ENCODE measurements at regions of chr20 and their contacts with region 1.

Region 1: DNA sequence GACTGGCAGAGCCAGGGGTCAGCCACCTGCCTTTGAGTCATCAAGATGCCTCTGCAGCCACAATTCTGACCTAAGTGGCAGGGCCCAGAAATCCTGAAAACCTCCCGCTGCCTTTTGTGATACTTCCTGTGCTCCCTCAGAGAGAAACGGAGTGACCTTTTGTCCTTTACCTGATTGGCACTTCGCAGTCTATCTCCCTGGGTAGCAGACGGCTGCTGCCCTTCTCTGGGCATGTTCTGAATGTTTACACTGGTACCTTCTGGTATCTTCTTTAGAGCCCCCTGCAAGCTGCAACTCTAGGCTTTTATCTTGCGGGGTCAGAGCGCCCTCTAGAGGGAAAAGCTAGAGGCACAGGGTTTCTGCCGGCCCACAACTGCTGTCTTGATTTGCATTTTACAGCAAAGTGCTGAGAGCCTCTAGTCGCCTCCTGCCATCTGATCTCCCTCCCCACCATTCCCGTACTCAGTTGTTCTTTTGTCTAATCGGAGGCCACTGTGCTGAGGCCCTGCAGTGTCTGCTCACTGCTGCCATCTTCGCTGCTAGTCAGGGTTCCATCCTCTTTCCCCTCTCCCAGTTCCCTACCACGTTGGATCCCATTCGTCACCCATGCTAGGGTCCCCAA is 26.9 kb downstream of the SPATA2 start:
- DNase-seq: no peak
- ATAC-seq: peak; percentile 55
- H3K4me3 ChIP-seq: no peak overlapping the region
- H3K27ac ChIP-seq: peak overlapping the region in 1 of 2 donors; percentile 14
- H3K4me1 ChIP-seq: no peaks in the 10 kb centered on the region
- H3K27me3 ChIP-seq: no peaks in the 10 kb centered on the region

Region 2: GRCh38 chr20:49812463-49813304 is 75.8 kb before region 1 on chr20 and contains the start of gene SLC9A8:
- intact Hi-C with region 1: loop called in 1 of 2 experiments (anchors 5 kb)
- DNase-seq: peak; percentile 95 to 96
- ATAC-seq: peak; percentile 96
- H3K4me3 ChIP-seq: peak within 1 kb of the TSS; percentile 59 to 80
- H3K27ac ChIP-seq: peak within 1 kb of the TSS; percentile 39 to 52
- H3K4me1 ChIP-seq: peaks cover 0 to 6% of the 10 kb centered on the region in 2 donors
- H3K27me3 ChIP-seq: no peaks in the 10 kb centered on the region
- total RNA-seq, gene SLC9A8: 12.5 to 14.6 TPM

Region 3: DNA sequence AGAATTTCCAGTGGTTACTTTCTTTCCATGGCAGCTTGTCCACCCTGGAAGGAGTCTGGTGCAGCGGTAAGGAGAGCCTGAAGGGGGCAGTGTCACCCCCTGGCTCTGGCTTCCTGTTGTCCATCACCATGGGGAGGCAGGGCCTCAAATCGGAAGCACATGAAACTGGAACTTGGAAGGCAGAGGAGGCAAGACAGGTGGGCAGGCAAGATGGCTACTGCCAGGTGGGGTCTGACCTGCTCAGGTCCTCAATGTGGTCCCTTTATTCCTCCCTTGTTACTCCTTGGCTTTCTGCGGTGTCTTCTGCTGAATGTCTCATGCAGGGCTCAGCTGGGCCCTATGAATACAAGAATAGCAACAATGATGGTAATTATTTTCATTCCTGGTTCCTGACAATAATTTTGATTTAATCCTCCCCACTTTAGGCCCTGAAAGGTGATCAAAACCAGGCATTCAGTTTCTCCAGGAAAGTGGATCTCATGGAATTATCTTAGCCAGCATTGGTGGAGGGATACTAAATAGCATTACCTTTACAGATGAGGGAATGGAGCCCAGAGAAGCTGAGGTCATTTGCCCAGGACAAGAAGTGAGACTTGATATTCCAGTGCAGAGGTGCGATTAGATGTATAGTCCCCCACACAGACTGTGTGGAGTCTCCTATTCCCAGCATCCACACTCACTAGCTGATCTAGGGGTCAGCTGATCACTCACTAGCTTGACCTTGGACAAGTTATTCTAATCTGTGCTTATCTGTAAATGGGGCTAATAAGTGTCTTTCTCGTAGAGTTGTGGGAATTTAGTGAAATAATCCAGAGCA is 76.7 kb after region 1 on chr20:
- intact Hi-C with region 1: no loop called
- DNase-seq: peak in 1 of 2 donors; percentile 68
- ATAC-seq: no peak
- H3K4me3 ChIP-seq: no peak overlapping the region
- H3K27ac ChIP-seq: no peak overlapping the region
- H3K4me1 ChIP-seq: no peaks in the 10 kb centered on the region
- H3K27me3 ChIP-seq: no peaks in the 10 kb centered on the region

Region 4: DNA sequence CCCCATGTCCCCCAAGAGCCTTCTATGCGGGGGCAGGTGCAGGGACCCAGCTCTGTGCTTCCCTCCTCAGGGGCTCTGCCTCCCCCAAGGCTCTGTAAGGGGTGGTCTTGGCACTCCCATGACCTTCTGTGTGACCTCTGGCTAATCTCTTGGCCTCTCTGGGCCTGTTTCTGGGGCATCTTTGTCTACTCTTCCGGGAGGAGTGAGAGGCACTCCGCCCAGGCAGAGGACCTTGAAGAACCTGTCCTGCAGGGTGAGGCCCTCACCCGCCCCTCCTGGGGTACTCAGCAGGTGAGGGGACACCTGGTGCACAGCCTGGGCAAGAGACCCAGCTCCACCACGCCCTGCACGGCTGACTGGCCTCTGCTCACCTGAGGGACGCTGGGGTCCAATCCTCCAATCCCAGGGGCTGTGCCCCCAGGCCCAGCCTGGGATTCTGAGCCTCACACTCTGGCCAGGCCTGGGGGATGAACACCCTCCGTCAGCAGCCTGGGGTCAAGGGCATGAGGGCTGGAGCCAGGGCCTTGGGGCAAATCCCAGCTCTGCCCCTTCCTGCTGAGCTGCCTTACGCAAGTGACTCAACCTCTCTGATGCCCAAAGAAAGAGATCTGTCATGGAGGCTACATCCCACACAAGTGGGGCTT is 471.7 kb after region 1 on chr20:
- intact Hi-C with region 1: no loop called
- DNase-seq: peak in 1 of 2 donors; percentile 63
- ATAC-seq: no peak
- H3K4me3 ChIP-seq: no peak overlapping the region
- H3K27ac ChIP-seq: no peak overlapping the region
- H3K4me1 ChIP-seq: no peaks in the 10 kb centered on the region
- H3K27me3 ChIP-seq: no peaks in the 10 kb centered on the region